ENCODE measurements at regions of chr6 and their contacts with region 1.

Region 1: DNA sequence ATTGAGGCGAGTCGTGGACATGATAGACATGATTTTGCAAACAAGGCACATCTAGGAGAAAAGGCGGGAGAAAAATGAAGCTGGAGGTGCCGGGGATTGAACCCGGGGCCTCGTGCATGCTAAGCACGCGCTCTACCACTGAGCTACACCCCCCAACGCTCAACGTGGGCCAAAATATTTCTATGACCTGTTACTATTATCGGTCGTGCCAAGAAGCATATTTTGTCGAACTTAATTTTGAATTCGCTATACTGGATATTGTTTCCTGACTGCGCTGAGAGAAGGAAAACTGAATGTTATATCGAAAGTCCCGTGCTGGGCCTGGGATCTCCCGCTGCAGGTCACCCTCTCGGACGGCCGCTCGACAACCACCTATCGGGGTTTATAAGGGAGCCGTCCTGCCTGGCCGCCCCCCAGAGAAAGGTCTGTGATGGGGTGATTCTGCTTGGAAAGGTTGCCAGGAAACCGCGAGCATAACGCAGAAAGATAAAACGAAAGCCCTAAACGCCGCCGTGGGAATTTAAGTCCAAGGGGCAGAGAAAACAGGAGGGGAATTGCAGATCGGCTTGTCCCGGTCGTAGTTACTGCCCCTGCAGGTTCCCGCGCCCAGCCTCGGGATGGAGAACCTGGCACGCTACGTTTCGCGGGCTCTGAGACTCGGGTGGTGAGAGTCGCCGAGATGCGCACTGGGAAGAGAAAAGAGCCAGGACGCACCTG is 60.0 kb downstream of the TRIM27 start:
- DNase-seq: peak; percentile 88
- ATAC-seq: peak; percentile 45
- H3K4me3 Mint-ChIP-seq: peak overlapping the region; percentile 74
- H3K27ac Mint-ChIP-seq: peak overlapping the region; percentile 78
- H3K4me1 Mint-ChIP-seq: peaks cover 36% of the 10 kb centered on the region
- H3K27me3 Mint-ChIP-seq: peaks cover 1% of the 10 kb centered on the region

Region 2: DNA sequence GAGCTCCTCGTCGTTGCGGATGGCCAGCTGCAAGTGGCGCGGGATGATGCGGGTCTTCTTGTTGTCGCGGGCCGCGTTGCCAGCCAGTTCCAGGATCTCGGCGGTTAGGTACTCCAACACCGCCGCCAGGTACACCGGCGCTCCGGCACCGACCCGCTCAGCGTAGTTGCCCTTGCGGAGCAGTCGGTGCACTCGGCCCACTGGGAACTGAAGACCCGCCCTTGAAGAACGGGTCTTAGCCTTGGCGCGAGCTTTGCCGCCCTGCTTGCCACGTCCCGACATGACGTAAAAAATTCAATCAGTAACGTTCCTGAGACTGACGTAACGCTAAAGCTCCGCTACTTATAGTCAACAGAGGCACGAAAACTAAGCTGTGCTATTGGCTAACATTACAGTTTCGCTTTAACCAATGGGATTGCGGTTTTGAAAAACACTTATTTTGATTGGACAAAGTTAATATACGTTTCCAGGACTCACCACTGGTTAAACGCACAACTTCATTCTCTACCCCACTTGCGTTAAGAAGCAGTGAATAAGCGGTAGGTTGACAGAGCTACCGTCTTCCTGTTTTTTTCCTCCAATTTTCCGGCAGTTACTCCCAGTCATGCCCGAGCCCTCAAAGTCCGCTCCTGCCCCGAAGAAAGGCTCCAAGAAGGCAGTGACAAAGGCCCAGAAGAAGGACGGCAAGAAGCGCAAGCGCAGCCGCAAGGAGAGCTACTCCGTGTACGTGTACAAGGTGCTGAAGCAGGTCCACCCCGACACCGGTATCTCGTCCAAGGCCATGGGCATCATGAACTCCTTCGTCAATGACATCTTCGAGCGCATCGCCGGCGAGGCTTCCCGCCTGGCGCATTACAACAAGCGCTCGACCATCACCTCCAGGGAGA is 1025.5 kb before region 1 on chr6:
- CTCF ChIA-PET with region 1: no interaction called
- POLR2A ChIA-PET with region 1: interaction called, 4 read pairs
- intact Hi-C with region 1: loop called in 1 of 2 experiments (anchors 10 kb)
- DNase-seq: peak; percentile 89
- ATAC-seq: peak; percentile 74
- H3K4me3 Mint-ChIP-seq: no peak overlapping the region
- H3K27ac Mint-ChIP-seq: no peak overlapping the region
- H3K4me1 Mint-ChIP-seq: peaks cover 23% of the 10 kb centered on the region
- H3K27me3 Mint-ChIP-seq: peaks cover 9% of the 10 kb centered on the region

Region 3: GRCh38 chr6:28880894-28881780 is 17.4 kb after region 1 on chr6:
- CTCF ChIA-PET with region 1: interaction called, 11 read pairs
- POLR2A ChIA-PET with region 1: interaction called, 46 read pairs
- intact Hi-C with region 1: loop called in 1 of 2 experiments (anchors 1 kb)
- DNase-seq: peak; percentile 79
- ATAC-seq: no peak
- H3K4me3 Mint-ChIP-seq: peak overlapping the region; percentile 57
- H3K27ac Mint-ChIP-seq: peak overlapping the region; percentile 69
- H3K4me1 Mint-ChIP-seq: peaks cover 29% of the 10 kb centered on the region
- H3K27me3 Mint-ChIP-seq: peaks cover 3% of the 10 kb centered on the region

Region 4: GRCh38 chr6:28923318-28924102 is 59.7 kb after region 1 on chr6 and contains the start of gene TRIM27:
- CTCF ChIA-PET with region 1: interaction called, 4 read pairs
- POLR2A ChIA-PET with region 1: interaction called, 3 read pairs
- intact Hi-C with region 1: loop called (anchors 1 to 2 kb)
- DNase-seq: peak; percentile 88
- ATAC-seq: peak; percentile 81
- H3K4me3 Mint-ChIP-seq: peak within 1 kb of the TSS; percentile 96
- H3K27ac Mint-ChIP-seq: peak within 1 kb of the TSS; percentile 88
- H3K4me1 Mint-ChIP-seq: peaks cover 36% of the 10 kb centered on the region
- H3K27me3 Mint-ChIP-seq: no peaks in the 10 kb centered on the region
- total RNA-seq, gene TRIM27: 48.5 to 54.6 TPM

Region 5: DNA sequence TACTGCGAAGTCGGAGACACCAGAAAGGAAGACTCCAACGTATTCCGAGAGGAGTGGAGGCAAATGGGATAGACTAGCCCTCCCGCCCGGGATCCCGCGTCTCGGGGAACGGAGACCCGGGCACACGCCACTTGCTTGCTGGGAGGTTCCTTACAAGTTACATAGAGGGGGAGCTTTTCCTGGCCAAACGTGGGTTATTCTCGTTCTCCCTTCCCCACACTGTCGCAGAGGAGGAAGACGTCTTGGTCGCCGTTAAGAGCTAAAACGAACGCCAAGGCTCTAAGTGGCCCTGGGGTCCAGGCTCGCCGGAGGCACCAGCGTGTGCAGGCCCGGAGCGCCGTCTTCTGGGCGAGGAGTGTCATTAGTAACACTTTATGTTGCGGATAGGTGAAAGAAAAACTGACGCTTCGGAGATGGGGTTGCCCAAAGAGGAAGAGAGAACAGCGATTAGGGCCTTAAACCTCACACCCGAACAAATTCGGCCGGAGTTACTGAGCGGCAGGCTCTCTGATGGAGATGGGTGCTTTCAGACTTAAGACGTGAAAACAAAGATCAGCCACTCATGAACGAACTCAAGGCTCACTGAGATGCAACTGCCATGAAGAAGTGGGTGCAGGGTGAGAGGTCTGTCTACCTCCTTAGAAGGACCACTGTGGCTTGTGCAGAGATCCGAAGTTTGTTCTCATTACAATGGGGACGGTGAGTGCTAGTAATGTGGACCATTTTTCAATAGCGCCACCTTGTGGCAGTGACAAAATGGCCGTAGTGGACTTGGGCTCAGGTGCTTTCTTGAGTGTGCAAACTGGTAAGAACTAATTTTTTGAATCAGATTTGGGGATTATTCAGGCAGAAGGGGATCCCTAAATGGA is 153.0 kb after region 1 on chr6:
- CTCF ChIA-PET with region 1: interaction called, 13 read pairs
- POLR2A ChIA-PET with region 1: interaction called, 3 read pairs
- intact Hi-C with region 1: loop called in 1 of 2 experiments (anchors 1 kb)
- DNase-seq: peak; percentile 90
- ATAC-seq: peak; percentile 87
- H3K4me3 Mint-ChIP-seq: peak overlapping the region; percentile 77
- H3K27ac Mint-ChIP-seq: peak overlapping the region; percentile 78
- H3K4me1 Mint-ChIP-seq: peaks cover 10% of the 10 kb centered on the region
- H3K27me3 Mint-ChIP-seq: peaks cover 20% of the 10 kb centered on the region

Region 6: GRCh38 chr6:29608131-29608530 is 744.4 kb after region 1 on chr6:
- CTCF ChIA-PET with region 1: no interaction called
- POLR2A ChIA-PET with region 1: no interaction called
- intact Hi-C with region 1: no loop called
- DNase-seq: no peak
- ATAC-seq: no peak
- H3K4me3 Mint-ChIP-seq: no peak overlapping the region
- H3K27ac Mint-ChIP-seq: no peak overlapping the region
- H3K4me1 Mint-ChIP-seq: no peaks in the 10 kb centered on the region
- H3K27me3 Mint-ChIP-seq: no peaks in the 10 kb centered on the region

Measured in activated CD4-positive, alpha-beta T cell treated with anti-CD3 and anti-CD28 coated beads for 36 hours (primary cell).